Mammary epithelial cell (primary cell): ENCODE measurements at regions of chr17 and their contacts with region 1.

Region 1: DNA sequence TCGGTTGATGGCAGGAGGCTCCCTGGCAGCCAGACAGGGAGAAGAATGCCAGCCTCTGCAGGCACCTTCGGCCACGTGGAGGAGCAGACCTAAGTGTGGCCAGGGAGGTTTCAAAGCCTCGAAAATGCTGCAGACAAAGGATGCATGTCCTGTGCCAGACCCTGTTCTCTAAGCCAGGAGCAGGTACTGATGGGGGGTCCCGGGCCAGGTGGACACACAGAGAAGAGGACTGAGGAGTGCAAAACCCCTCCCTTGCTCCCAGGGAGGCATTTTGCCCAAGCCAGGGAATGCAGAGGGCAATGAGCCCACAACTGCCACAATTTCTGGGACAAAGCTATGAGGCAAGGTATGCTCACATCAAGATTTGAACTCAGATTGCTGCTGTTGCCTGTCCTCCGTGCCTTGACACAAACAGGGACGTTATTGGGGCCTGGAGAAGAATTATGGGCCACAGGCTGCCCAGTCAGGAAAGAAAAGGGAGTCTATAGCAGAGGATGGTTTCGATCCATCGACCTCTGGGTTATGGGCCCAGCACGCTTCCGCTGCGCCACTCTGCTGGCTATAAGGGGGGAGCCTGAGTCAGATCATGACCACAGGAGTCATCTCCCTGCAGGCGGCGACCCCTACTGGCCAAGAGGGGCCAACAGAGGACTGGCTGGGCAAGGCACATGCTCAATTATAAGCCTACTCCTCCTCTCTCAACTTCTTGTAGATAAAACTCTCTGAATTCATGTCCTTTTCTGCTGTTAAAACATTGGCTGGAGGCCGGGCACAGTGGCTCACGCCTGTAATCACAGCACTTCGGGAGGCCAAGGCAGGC is 25.1 kb upstream of the FOXK2 start:
- DNase-seq: peak; percentile 95
- H3K4me3 ChIP-seq: no peak overlapping the region
- H3K27ac ChIP-seq: no peak overlapping the region
- H3K4me1 ChIP-seq: peaks cover 24% of the 10 kb centered on the region
- H3K27me3 ChIP-seq: no peaks in the 10 kb centered on the region
- CTCF ChIP-seq: peak; percentile 85 to 95

Region 2: GRCh38 chr17:82457997-82458864 is 36.2 kb before region 1 on chr17 and contains the start of gene NARF:
- CTCF ChIA-PET with region 1: no interaction called
- dilution Hi-C with region 1: no loop called
- in situ Hi-C with region 1: no loop called
- intact Hi-C with region 1: loop called (anchors 1 kb)
- DNase-seq: peak; percentile 99
- H3K4me3 ChIP-seq: peak within 1 kb of the TSS; percentile 43 to 88 (median 79)
- H3K27ac ChIP-seq: peak within 1 kb of the TSS; percentile 81
- H3K4me1 ChIP-seq: peaks cover 7% of the 10 kb centered on the region
- H3K27me3 ChIP-seq: no peaks in the 10 kb centered on the region
- CTCF ChIP-seq: no peak
- total RNA-seq, gene NARF: 25.0 to 31.5 TPM

Region 3: DNA sequence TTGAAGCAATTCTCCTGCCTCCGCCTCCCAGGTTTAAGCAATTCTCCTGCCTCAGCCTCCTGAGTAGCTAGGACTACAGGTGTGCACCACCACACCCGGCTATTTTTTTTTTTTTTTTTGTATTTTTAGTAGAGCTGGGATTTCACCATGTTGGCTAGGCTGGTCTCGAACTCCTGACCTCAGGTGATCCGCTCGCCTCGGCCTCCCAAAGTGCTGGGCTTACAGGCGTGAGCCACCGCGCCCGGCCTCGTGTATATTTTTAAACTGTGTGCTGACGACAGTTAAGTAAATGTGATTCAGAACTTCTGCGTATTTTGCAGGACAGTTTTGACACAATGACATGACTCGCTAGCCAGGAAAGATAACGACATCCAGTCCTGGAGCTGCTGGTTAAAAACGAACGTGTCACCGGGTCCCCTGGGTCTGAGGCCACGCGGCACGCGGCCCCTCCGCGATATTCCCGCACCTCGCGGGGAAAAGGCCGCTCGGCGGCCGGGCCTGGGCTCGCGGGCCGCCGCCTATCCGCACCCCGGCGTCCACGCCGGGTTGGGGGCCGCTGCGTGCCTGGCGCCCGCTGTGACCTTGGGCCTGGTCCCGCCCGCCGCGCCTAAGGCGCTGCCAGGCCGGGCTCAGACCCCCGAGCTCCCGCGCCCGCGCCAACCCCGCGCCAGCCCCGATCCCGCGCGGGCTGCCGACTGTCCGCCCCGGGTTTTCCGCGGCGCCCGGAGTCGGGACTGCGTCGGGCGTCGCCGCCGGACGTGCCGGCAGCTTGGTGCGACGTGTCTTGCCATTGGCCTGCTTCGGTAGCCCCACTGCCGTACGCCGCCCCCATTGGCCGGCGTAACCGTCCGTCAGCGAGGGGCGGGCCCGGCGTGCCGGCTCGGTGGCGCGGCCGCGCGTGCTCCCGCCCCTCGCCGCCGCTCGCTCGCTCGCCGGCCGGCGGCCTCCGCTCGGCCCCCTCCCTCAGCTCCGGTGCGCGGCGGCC is 24.7 kb after region 1 on chr17 and contains the start of gene FOXK2:
- CTCF ChIA-PET with region 1: interaction called, 19 read pairs
- dilution Hi-C with region 1: no loop called
- in situ Hi-C with region 1: no loop called
- intact Hi-C with region 1: loop called (anchors 1 kb)
- DNase-seq: peak; percentile 93
- H3K4me3 ChIP-seq: peak within 1 kb of the TSS; percentile 66 to 83 (median 74)
- H3K27ac ChIP-seq: peak within 1 kb of the TSS; percentile 79
- H3K4me1 ChIP-seq: peaks cover 11% of the 10 kb centered on the region
- H3K27me3 ChIP-seq: no peaks in the 10 kb centered on the region
- CTCF ChIP-seq: no peak
- total RNA-seq, gene FOXK2: 57.3 to 80.8 TPM

Region 4: DNA sequence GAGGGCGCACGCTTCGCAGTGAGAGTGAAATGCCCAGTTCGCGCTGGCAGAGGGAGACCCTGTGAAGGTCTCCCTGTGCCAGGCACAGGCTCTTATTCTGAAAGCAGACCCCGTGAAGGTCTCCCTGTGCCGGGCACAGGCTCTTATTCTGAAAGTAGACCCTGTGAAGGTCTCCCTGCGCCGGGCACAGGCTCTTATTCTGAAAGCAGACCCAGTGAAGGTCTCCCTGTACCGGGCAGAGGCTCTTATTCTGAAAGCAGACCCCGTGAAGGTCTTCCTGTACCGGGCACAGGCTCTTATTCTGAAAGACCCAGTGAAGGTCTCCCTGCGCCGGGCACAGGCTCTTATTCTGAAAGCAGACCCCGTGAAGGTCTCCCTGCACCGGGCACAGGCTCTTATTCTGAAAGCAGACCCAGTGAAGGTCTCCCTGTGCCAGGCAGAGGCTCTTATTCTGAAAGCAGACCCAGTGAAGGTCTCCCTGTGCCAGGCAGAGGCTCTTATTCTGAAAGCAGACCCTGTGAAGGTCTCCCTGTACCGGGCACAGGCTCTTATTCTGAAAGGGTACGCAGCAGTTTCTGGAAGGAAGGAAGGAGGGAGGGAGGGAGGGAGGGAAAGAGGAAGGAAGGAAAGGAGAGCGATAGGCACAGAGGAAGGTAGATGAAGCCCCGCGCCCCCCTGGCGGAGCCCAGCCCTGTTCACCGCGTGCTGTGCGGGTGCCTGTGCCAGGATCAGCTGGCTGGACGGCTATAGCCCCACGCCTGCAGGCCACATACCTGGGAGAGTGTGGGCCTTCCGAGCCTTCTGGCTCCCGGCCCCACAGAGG is 98.5 kb after region 1 on chr17:
- CTCF ChIA-PET with region 1: no interaction called
- dilution Hi-C with region 1: no loop called
- in situ Hi-C with region 1: no loop called
- intact Hi-C with region 1: no loop called
- DNase-seq: peak; percentile 68
- H3K4me3 ChIP-seq: peak overlapping the region; percentile 57 to 64 (median 63)
- H3K27ac ChIP-seq: peak overlapping the region; percentile 11
- H3K4me1 ChIP-seq: peaks cover 16% of the 10 kb centered on the region
- H3K27me3 ChIP-seq: no peaks in the 10 kb centered on the region
- CTCF ChIP-seq: no peak